ENCODE measurements at regions of chr1 and their contacts with region 1.

Region 1: DNA sequence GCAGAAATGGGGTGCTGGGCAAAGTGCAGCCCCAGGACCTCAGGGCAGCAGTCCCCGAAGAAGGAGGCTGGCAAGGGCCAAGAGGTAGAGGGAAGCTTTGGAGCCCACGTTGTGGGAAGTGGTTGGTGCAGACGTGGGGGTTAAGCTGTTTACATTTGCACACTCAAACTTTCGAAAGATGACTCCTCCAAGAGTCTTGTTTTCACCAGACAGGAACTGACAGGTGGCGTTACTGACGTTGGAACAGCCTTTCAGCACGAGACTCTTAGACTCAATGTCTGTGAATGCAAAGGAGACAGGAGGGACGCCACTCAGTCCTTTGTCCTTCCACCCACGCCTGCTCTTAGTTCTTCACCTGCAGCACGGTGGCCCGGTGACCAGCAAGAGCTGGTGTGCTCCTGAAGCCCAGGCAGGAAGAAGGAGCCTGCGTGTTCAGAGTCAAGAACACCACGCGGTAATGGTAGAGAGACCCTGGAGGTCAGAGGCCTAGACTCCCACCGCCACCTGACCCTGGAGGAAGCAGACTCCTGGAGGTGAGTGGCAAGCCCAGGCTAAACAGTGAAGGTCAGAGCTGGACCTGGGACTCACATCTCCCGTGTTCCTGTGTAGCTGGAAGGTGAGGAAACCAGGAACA is 15.9 kb downstream of the LYPD8 start:
- DNase-seq: no peak
- H3K4me3 ChIP-seq: no peak overlapping the region
- H3K27ac ChIP-seq: no peak overlapping the region
- H3K4me1 ChIP-seq: no peaks in the 10 kb centered on the region
- H3K27me3 ChIP-seq: no peaks in the 10 kb centered on the region
- CTCF ChIP-seq: no peak
- POLR2A ChIP-seq: no peak

Region 2: GRCh38 chr1:248714248-248714647 is 25.4 kb before region 1 on chr1:
- CTCF ChIA-PET with region 1: no interaction called
- POLR2A ChIA-PET with region 1: no interaction called
- dilution Hi-C with region 1: no loop called
- intact Hi-C with region 1: loop called (anchors 1 kb)
- DNase-seq: no peak
- H3K4me3 ChIP-seq: no peak overlapping the region
- H3K27ac ChIP-seq: no peak overlapping the region
- H3K4me1 ChIP-seq: no peaks in the 10 kb centered on the region
- H3K27me3 ChIP-seq: no peaks in the 10 kb centered on the region
- CTCF ChIP-seq: no peak
- POLR2A ChIP-seq: no peak

Measured in endothelial cell of umbilical vein (primary cell).